ENCODE measurements at regions of chr7 and their contacts with region 1.

Region 1: DNA sequence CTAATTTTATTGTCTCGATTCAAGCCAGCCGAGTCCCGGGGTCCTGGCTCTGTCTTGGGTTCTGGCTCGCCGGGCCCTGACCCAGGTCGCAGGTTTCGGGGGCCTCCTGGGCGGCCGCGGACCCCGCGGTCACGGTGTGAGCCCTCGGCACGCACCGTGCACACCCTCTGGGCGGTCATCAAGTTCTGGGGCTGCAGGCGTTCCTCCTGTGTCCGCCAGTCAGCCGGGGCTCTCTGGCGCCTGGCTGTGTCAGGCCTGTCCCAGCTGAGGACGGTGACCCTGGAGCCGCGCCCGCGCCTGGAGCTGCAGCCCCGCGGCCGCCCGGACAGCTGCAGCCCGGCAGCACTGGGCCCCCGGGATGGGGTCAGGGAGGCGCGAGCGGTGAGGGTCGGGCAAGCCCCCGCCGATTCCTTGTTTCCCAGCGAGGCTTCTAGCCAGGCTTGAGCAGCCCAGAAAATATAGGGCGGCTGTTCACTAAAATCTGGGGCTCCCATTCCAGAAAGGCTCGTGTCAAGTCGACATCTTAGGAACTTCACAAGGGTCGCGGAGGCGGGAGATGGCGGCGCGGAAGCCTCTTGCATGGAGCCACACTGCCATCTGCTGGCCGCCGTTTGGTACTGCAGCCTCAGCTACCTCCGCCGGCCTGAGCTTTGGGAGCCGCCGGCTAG is 4.2 kb upstream of the HOXA7 start:
- DNase-seq: peak; percentile 93
- H3K4me3 Mint-ChIP-seq: peak overlapping the region; percentile 72
- H3K27ac Mint-ChIP-seq: no peak overlapping the region
- H3K4me1 Mint-ChIP-seq: peaks cover 4% of the 10 kb centered on the region
- H3K27me3 Mint-ChIP-seq: peaks cover 74% of the 10 kb centered on the region

Region 2: GRCh38 chr7:25862260-25863037 is 1298.2 kb before region 1 on chr7:
- intact Hi-C with region 1: loop called (anchors 2 kb)
- DNase-seq: peak; percentile 99
- H3K4me3 Mint-ChIP-seq: peak overlapping the region; percentile 76
- H3K27ac Mint-ChIP-seq: peak overlapping the region; percentile 75
- H3K4me1 Mint-ChIP-seq: peaks cover 30% of the 10 kb centered on the region
- H3K27me3 Mint-ChIP-seq: peaks cover 68% of the 10 kb centered on the region

Region 3: GRCh38 chr7:26686448-26686981 is 474.2 kb before region 1 on chr7:
- intact Hi-C with region 1: loop called (anchors 1 kb)
- DNase-seq: peak; percentile 63
- H3K4me3 Mint-ChIP-seq: no peak overlapping the region
- H3K27ac Mint-ChIP-seq: no peak overlapping the region
- H3K4me1 Mint-ChIP-seq: no peaks in the 10 kb centered on the region
- H3K27me3 Mint-ChIP-seq: peaks cover 32% of the 10 kb centered on the region

Region 4: GRCh38 chr7:27095897-27096767 is 64.5 kb before region 1 on chr7 and contains the start of gene HOXA1:
- intact Hi-C with region 1: loop called (anchors 2 kb)
- DNase-seq: peak; percentile 88
- H3K4me3 Mint-ChIP-seq: peak within 1 kb of the TSS; percentile 85
- H3K27ac Mint-ChIP-seq: peak within 1 kb of the TSS; percentile 62
- H3K4me1 Mint-ChIP-seq: peaks cover 17% of the 10 kb centered on the region
- H3K27me3 Mint-ChIP-seq: peaks cover 90% of the 10 kb centered on the region
- total RNA-seq, gene HOXA1: 0.09 and 0.16 TPM in 2 replicates

Region 5: GRCh38 chr7:27242555-27243339 is 82.1 kb after region 1 on chr7 and contains the start of gene EVX1:
- intact Hi-C with region 1: loop called (anchors 2 kb)
- DNase-seq: no peak
- H3K4me3 Mint-ChIP-seq: no peak within 1 kb of the TSS
- H3K27ac Mint-ChIP-seq: peak within 1 kb of the TSS; percentile 16
- H3K4me1 Mint-ChIP-seq: no peaks in the 10 kb centered on the region
- H3K27me3 Mint-ChIP-seq: peaks cover 83% of the 10 kb centered on the region
- total RNA-seq, gene EVX1: not detected in 2 replicates